ENCODE measurements at regions of chr11 and their contacts with region 1.

Region 1: DNA sequence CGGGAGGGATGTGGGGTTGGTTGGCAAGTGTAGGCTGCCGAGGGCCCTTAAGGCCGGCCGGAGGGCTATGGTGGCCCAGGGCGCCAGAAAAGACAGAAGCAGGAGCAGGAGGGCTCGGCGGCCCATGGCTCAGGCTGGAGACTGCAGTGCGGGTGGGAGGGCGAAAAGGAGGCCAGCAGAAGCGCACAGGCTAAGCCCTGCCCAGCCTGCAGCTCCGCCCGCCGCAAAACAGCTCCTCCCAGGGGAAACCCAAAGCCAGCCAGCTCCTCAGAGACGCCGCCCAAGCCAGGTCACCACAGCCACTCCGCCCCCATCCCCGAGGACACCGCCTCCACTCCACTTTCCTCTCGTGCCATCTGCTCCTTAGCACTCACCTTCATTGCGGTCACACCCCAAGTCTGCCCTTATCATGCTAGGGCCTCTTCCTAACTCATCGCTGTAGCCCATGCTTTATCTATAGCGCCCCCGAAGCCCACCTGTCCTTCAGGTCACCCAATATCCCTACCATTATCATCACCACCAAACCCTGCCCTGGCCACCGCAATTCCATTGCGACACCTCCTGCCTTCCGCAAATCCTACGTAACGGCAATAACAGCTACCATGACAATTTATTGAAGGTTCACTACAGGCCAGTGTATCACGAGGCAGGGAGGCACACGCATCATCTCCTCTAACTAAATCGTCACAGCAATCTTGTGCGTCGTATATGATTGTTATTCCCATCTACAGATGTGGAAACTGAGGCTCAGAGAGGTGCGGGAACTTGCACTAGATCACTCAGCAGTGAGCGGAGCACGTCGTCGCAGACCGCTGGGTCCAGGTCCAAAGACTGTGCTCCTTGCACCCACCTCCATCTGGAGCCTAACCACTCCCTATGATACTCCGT is at the start of gene PRCP:
- DNase-seq: peak; percentile 93 to 94
- ATAC-seq: peak; percentile 93 to 98 (median 96)
- H3K4me3 ChIP-seq: peak within 1 kb of the TSS; percentile 56 to 85 (median 75)
- H3K27ac ChIP-seq: peak within 1 kb of the TSS; percentile 68 to 94 (median 85)
- H3K4me1 ChIP-seq: peaks cover 7 to 50% (median 25%) of the 10 kb centered on the region in 9 donors
- H3K27me3 ChIP-seq: no peaks in the 10 kb centered on the region
- CTCF ChIP-seq: peak in 3 of 9 donors; percentile 8 to 18 (median 10)
- total RNA-seq, gene PRCP: 28.8 to 89.8 (median 41.4) TPM

Region 2: GRCh38 chr11:82718307-82718706 is 182.2 kb before region 1 on chr11:
- intact Hi-C with region 1: loop called in 2 of 10 experiments (anchors 5 to 10 kb)
- DNase-seq: peak in 1 of 2 donors; percentile 16
- ATAC-seq: peak in 7 of 8 donors; percentile 36 to 78 (median 72)
- H3K4me3 ChIP-seq: no peak overlapping the region
- H3K27ac ChIP-seq: no peak overlapping the region
- H3K4me1 ChIP-seq: peaks cover 0 to 25% (median 6%) of the 10 kb centered on the region in 9 donors
- H3K27me3 ChIP-seq: peaks cover 0 to 12% (median 5%) of the 10 kb centered on the region in 7 donors
- CTCF ChIP-seq: peak; percentile 14 to 86 (median 69)

Region 3: DNA sequence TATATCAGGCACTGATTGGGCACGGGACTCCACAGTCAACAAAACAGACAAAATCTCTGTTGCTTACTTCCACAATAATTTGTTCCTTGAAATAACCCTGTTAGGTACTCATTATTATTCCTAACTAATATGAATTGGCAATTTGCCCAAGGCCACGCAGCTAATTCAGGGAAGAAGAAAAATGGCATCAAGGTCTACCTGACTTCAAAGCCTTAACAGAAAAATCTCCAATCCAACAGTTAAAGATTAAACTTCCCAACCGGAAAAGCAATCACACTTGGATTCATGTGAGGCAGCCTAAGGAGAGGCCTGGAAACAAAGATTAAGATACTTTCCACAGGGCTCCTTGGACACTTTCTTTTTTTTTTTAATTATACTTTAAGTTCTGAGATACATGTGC is 69.2 kb before region 1 on chr11:
- intact Hi-C with region 1: no loop called
- DNase-seq: no peak
- ATAC-seq: no peak
- H3K4me3 ChIP-seq: no peak overlapping the region
- H3K27ac ChIP-seq: no peak overlapping the region
- H3K4me1 ChIP-seq: no peaks in the 10 kb centered on the region
- H3K27me3 ChIP-seq: no peaks in the 10 kb centered on the region
- CTCF ChIP-seq: no peak

Region 4: GRCh38 chr11:82980292-82980691 is 79.8 kb after region 1 on chr11:
- intact Hi-C with region 1: loop called in 1 of 10 experiments (anchors 10 kb)
- DNase-seq: no peak
- ATAC-seq: peak in 1 of 8 donors; percentile 42
- H3K4me3 ChIP-seq: no peak overlapping the region
- H3K27ac ChIP-seq: no peak overlapping the region
- H3K4me1 ChIP-seq: peaks cover 0 to 29% (median 13%) of the 10 kb centered on the region in 9 donors
- H3K27me3 ChIP-seq: no peaks in the 10 kb centered on the region
- CTCF ChIP-seq: no peak

Region 5: DNA sequence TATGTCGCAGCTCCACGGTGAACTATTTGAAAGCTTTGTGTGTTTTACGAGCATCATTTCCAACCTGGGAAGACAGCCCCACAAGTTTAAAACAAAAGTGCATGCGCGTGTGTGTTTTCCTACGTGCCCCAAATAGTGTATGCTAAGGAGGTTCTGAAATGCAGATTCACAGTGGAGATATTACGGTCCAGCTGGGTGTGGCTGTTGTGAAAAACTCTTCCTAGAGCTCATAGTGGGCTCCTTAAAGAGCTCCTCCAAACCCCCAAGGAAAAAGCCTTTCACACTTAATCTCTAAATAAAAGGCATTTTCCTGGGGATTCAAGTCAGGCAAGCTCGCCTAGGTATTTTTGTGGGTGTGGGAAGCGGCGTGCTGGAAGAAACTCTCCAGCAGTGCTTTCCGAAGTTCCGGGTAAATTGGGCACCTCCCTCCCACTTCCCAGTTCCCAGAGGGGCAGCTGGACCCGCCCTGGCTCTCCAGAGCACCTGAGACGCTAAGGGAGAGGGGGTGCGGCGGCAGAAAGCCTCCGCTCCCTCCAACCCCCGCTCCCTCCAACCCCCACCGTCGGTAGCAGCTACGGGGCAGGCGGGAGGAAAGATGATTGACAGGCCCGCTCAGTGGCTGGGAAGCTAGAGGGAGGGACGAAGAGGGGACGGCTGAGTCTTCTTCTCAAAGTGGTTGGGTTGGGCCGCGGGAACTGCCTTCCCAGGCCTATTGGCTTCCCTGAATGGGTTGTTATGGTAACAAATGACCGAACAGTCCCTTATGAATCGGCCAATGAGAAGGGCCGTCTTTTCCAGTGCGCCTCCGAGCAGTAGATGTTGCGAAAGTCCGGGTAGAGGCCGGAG is 255.9 kb after region 1 on chr11:
- intact Hi-C with region 1: loop called in 5 of 10 experiments (anchors 5 to 10 kb)
- DNase-seq: peak; percentile 98 to 99
- ATAC-seq: peak; percentile 94 to 98 (median 96)
- H3K4me3 ChIP-seq: peak overlapping the region; percentile 36 to 99 (median 84)
- H3K27ac ChIP-seq: peak overlapping the region; percentile 66 to 100 (median 94)
- H3K4me1 ChIP-seq: peaks cover 0 to 29% (median 27%) of the 10 kb centered on the region in 9 donors
- H3K27me3 ChIP-seq: no peaks in the 10 kb centered on the region
- CTCF ChIP-seq: no peak

Region 6: DNA sequence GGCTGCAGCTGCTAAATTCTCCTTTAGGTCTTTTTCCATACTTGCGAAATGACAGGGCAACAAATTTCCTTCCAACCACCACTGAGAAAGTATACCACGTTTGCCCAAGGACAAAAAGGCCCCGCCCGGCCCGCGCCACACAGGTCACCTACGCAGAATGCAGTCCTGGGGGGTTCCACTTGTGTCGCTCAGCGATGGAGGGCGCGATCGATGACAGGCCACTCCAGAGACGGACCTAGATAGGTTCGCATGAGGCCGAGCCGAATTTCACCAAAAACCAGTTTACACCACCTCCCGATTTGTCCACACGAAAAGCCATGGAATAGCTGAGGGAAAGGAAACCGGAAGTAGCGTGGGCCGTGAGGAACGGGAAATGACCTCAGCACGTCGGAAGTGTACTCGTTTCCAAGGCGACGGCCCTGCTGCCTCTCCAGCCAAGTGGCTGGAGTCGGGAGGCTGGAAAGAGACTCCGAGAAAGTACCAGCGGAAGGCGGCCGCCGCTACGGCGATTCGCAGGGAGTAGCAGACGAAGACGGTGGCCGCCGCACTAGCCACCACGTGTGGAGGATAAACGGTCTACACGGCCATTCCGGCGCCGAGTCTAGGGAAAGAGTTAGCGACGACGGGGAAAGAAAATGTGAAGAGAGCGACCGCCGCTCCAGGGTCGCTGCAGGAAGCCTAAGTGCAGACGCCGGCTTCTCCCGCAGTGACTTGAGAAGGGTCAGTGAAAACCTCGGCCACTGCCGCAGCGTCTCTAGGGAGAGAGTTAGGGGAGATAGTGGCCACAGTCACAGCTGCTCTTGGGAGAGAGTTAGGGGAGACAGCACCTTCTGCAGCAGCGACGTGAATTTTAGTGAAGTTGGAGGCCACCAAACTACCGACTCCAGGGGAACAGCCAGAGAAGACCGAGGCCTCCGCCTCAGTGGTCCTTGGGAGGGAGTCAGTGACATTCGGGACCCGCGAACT is 293.1 kb after region 1 on chr11 and contains the start of gene ANKRD42:
- intact Hi-C with region 1: loop called in 6 of 10 experiments (anchors 2 to 10 kb)
- DNase-seq: peak; percentile 88 to 96
- ATAC-seq: peak; percentile 97 to 99 (median 98)
- H3K4me3 ChIP-seq: peak within 1 kb of the TSS; percentile 63 to 90 (median 80)
- H3K27ac ChIP-seq: peak within 1 kb of the TSS; percentile 37 to 96 (median 90)
- H3K4me1 ChIP-seq: peaks cover 7 to 39% (median 30%) of the 10 kb centered on the region in 9 donors
- H3K27me3 ChIP-seq: no peaks in the 10 kb centered on the region
- CTCF ChIP-seq: no peak
- total RNA-seq, gene ANKRD42: 3.7 to 10.7 (median 6.4) TPM

Region 7: DNA sequence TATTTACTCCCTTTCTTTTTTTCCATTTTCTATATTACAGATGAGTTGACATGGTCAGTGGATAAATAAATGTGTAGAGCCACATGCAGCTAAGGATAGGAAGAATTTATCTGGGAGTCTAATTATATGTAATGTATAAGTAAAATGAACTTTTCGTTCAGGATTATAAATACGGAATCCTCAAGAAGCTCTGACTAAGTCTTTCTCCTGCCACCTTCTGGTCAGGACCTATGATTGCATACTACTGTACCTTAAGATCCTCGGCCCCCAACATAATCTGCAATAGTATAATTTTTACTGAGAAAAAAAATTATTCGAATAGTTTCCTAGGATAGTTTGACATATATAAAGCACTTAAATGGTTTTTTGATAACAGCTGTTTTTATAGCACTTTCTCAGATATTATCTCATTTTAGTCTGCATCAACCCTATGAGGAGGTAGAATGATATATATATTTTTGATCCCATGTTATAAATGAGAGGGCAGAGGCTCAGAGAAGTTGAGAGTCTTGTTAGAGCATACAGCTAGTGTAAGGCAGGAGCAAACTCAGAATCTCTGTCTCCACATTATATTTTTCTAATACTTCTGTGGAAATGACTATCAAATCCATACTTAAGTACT is 349.6 kb after region 1 on chr11:
- intact Hi-C with region 1: loop called in 6 of 10 experiments (anchors 2 to 10 kb)
- DNase-seq: no peak
- ATAC-seq: peak in 3 of 8 donors; percentile 42 to 65 (median 55)
- H3K4me3 ChIP-seq: no peak overlapping the region
- H3K27ac ChIP-seq: no peak overlapping the region
- H3K4me1 ChIP-seq: no peaks in the 10 kb centered on the region
- H3K27me3 ChIP-seq: no peaks in the 10 kb centered on the region
- CTCF ChIP-seq: peak; percentile 43 to 84 (median 69)

Region 8: DNA sequence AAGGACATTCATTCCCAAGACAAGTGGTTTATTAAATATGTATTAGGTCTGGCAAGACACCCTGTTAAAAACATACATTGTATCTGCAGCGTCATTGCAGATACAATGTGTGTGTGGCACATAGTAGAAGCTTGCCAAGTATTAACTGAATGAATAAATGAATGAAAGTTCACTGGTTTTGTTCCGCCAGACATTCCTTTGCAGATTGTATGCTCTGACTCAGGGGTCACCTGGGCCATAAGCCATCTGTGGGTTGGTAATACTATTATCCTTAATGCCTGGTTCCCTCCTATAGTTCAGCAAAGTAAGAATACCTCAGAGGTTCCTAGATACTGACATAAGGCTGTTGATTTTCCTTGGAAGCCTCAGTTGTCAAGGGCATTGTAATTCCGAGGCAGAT is 762.9 kb after region 1 on chr11:
- intact Hi-C with region 1: no loop called
- DNase-seq: no peak
- ATAC-seq: no peak
- H3K4me3 ChIP-seq: no peak overlapping the region
- H3K27ac ChIP-seq: no peak overlapping the region
- H3K4me1 ChIP-seq: peaks cover 0 to 4% (median 0%) of the 10 kb centered on the region in 9 donors
- H3K27me3 ChIP-seq: no peaks in the 10 kb centered on the region
- CTCF ChIP-seq: no peak

Region 9: GRCh38 chr11:83819933-83820549 is 919.5 kb after region 1 on chr11:
- intact Hi-C with region 1: loop called in 2 of 10 experiments (anchors 10 kb)
- DNase-seq: peak in 1 of 2 donors; percentile 12
- ATAC-seq: peak in 2 of 8 donors; percentile 56 to 72
- H3K4me3 ChIP-seq: no peak overlapping the region
- H3K27ac ChIP-seq: no peak overlapping the region
- H3K4me1 ChIP-seq: peaks cover 0 to 7% (median 0%) of the 10 kb centered on the region in 9 donors
- H3K27me3 ChIP-seq: no peaks in the 10 kb centered on the region
- CTCF ChIP-seq: peak; percentile 23 to 75 (median 66)

Measured in heart right ventricle (tissue), 16 donors.